Right ventricle myocardium superior (tissue), 1 donor: ENCODE measurements at regions of chr13 and their contacts with region 1.

Region 1: GRCh38 chr13:110915057-110915873 is at the start of gene ANKRD10:
- DNase-seq: peak; percentile 100
- ATAC-seq: peak; percentile 91
- total RNA-seq, gene ANKRD10: 45.3 TPM

Region 2: DNA sequence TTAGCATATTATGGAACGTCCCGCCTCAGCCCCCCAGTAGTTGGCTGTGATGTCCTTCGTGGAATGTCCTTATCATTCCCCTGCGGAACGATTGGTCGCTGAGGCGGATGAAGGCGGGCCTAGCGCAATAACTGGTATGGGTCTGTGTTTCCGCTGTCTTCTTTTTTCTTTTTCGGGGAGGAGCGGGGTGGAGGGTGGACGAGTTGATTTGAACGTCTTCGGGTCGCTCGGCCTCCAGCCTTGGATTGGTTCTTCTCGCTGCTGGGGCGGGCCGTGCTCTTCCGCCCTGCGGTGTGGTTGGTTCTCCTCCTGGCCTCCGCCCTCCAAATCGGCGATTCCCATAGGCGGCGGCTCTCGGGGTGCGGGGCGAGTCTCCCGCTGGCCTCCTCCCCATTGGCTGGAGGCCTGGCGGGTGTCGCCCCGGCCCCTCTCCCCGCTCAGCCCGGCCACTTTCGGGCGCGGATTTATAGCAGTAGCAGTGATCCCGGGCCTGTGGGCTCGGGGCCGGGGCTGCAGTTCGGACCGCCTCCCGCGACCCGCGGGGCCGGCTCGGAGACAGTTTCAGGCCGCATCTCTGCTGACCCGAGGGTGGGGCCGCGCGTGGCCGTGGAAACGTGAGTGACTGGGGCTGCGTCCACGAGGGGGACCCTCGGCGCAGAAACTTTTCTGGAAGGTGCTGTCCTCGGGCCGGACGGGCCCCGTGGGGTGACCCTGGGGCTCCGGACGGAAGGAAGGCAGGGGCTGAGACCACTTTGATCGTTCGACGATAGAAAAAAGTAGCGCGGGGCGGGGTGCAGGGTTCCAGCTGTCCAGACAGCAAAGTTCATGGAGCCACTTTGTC is 199.7 kb before region 1 on chr13:
- intact Hi-C with region 1: loop called (anchors 10 kb)
- DNase-seq: peak; percentile 98
- ATAC-seq: peak; percentile 72

Region 3: DNA sequence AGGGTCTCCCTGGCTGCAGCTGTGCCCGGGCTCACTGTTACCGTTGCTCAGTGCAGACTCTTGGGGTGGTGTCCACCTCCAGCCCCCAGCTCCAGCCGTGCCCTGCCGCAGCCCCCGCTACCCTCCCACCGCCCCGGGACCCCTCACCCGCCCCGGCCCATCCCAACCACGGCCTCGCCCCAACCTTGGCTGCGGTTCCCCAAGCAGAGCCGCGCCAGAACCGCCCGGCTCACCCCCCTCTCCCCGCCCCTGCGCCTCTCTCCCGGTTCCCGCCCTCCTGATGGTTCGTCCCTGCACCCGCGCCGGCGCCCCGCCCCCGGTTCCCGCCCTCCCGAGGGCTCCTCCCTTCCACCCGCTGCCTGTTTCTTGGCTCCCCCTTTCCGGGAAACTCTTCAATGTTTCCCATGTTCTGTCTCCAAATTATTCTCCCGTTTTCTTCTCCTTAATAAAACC is 40.7 kb before region 1 on chr13:
- intact Hi-C with region 1: loop called (anchors 5 kb)
- DNase-seq: peak; percentile 93
- ATAC-seq: peak; percentile 92

Region 4: GRCh38 chr13:111228262-111229144 is 313.2 kb after region 1 on chr13:
- intact Hi-C with region 1: loop called (anchors 10 kb)
- DNase-seq: no peak
- ATAC-seq: no peak